Activated CD4-positive, alpha-beta memory T cell treated with anti-CD3 and anti-CD28 coated beads, Interleukin-2, amount 10 ng/mL, durations not matched to agents 7 days and 5 days (primary cell): ENCODE measurements at regions of chr5 and their contacts with region 1.

Region 1: GRCh38 chr5:176447982-176448608 is at the start of gene FAF2:
- DNase-seq: peak; percentile 98
- H3K4me3 Mint-ChIP-seq: peak within 1 kb of the TSS; percentile 98
- H3K27ac Mint-ChIP-seq: peak within 1 kb of the TSS; percentile 96
- H3K4me1 Mint-ChIP-seq: peaks cover 39% of the 10 kb centered on the region
- H3K27me3 Mint-ChIP-seq: peaks cover 2% of the 10 kb centered on the region
- total RNA-seq, gene FAF2: 36.2 to 38.7 TPM

Region 2: GRCh38 chr5:176162198-176162597 is 285.9 kb before region 1 on chr5:
- CTCF ChIA-PET with region 1: no interaction called
- POLR2A ChIA-PET with region 1: no interaction called
- DNase-seq: no peak
- H3K4me3 Mint-ChIP-seq: no peak overlapping the region
- H3K27ac Mint-ChIP-seq: no peak overlapping the region
- H3K4me1 Mint-ChIP-seq: no peaks in the 10 kb centered on the region
- H3K27me3 Mint-ChIP-seq: peaks cover 45% of the 10 kb centered on the region

Region 3: GRCh38 chr5:176337913-176338312 is 110.2 kb before region 1 on chr5:
- CTCF ChIA-PET with region 1: no interaction called
- POLR2A ChIA-PET with region 1: no interaction called
- DNase-seq: no peak
- H3K4me3 Mint-ChIP-seq: no peak overlapping the region
- H3K27ac Mint-ChIP-seq: no peak overlapping the region
- H3K4me1 Mint-ChIP-seq: no peaks in the 10 kb centered on the region
- H3K27me3 Mint-ChIP-seq: no peaks in the 10 kb centered on the region

Region 4: DNA sequence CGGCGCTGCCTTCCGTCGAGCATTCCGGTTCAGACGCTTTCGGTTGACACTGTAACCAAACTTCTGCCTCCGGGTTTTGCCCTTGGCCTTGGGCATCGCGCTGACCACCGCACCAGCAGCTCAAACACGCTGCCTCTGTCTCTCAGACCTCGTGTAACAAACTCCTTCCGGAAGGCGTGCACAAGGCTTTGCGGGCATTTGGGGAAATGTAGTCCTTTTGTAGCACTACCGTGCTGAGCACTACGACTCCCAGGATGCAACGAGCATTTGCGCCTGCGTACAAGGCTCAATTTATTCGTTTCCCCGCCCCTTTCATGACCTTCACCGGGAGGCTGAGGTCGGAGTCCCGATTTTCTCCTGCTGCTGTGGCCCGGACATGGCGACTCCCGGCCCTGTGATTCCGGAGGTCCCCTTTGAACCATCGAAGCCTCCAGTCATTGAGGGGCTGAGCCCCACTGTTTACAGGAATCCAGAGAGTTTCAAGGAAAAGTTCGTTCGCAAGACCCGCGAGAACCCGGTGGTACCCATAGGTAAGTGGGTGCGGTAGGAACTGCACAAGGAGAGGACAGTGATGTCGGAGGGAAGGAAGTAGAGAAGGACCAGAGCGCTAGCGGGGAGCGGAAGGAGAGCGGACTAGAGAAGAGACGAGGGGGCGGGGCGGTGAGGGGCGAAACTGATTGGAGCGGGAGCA is 59.5 kb before region 1 on chr5 and contains the starts of genes HIGD2A and NOP16:
- CTCF ChIA-PET with region 1: interaction called, 4 read pairs
- POLR2A ChIA-PET with region 1: interaction called, 15 read pairs
- DNase-seq: peak; percentile 99
- H3K4me3 Mint-ChIP-seq: peak within 1 kb of the TSS; percentile 95
- H3K27ac Mint-ChIP-seq: peak within 1 kb of the TSS; percentile 99
- H3K4me1 Mint-ChIP-seq: peaks cover 31% of the 10 kb centered on the region
- H3K27me3 Mint-ChIP-seq: no peaks in the 10 kb centered on the region
- total RNA-seq, gene HIGD2A: 142 to 147 TPM
- total RNA-seq, gene NOP16: 24.2 to 24.7 TPM

Region 5: DNA sequence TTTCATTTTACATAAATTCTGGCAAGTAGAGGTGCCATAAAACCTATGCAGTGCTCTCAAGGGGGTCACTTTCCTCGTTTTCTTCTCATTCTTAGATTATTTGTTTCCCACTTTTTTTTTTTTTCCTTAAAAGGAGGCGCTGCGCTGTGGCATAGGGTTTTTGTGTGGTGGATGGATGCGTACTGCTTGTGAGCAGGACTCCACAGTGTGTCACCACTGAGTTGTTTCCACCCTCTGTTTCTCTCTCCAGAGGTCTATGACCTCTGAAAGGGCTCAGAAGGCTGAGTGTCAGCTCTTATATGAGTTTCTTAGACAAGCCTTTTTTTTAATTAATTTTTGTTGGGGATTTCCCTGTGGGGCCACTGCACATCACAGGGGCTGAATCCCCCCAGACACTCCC is 18.1 kb before region 1 on chr5:
- CTCF ChIA-PET with region 1: interaction called, 12 read pairs
- POLR2A ChIA-PET with region 1: interaction called, 7 read pairs
- DNase-seq: no peak
- H3K4me3 Mint-ChIP-seq: no peak overlapping the region
- H3K27ac Mint-ChIP-seq: no peak overlapping the region
- H3K4me1 Mint-ChIP-seq: peaks cover 5% of the 10 kb centered on the region
- H3K27me3 Mint-ChIP-seq: peaks cover 14% of the 10 kb centered on the region

Region 6: DNA sequence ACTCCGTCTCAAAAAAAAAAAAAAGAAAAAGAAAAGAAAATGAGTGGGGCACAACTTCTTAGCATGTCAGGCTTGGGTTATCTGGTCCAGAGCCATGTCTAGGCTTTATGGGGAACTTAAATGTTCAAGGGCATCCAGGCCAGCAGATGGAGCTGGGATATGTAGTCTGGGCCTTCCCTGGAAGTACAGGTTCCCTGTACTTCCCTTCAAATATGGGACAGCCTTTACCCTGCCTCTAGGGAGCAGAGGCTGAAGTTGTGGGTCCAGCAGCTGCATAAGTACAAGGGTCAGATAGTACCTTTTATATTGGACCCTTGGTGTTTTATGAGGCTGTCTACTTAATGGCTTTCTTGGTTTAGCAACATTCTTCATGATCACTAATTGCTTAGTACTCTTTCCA is 42.2 kb after region 1 on chr5:
- CTCF ChIA-PET with region 1: interaction called, 6 read pairs
- POLR2A ChIA-PET with region 1: interaction called, 17 read pairs
- DNase-seq: no peak
- H3K4me3 Mint-ChIP-seq: no peak overlapping the region
- H3K27ac Mint-ChIP-seq: no peak overlapping the region
- H3K4me1 Mint-ChIP-seq: peaks cover 34% of the 10 kb centered on the region
- H3K27me3 Mint-ChIP-seq: no peaks in the 10 kb centered on the region

Region 7: GRCh38 chr5:176537608-176538504 is 89.8 kb after region 1 on chr5:
- CTCF ChIA-PET with region 1: interaction called, 73 read pairs
- POLR2A ChIA-PET with region 1: interaction called, 156 read pairs
- DNase-seq: peak; percentile 99
- H3K4me3 Mint-ChIP-seq: peak overlapping the region; percentile 97
- H3K27ac Mint-ChIP-seq: peak overlapping the region; percentile 95
- H3K4me1 Mint-ChIP-seq: peaks cover 69% of the 10 kb centered on the region
- H3K27me3 Mint-ChIP-seq: no peaks in the 10 kb centered on the region